HepG2 (cell line): ENCODE measurements at regions of chr13 and their contacts with region 1.

Region 1: DNA sequence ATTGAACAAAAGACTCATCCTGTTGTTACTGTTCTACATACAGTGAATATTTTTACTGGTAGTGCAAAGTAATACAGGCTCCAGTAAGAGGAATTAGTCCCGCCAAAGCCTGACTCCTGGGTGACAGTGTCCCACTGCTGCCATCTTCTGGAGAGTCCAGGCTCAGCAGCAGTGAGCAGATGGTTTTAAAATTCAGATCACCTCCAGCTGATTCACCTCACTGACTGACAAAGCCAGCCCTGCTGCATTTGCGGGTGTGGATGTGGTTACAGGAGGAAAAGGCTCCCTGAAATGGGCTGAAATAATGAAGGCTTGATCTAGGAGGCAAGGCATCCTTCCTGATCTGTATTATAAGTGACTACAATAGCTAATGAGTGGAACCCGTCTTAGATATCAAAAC is 18.3 kb downstream of the PABPC3 start:
- DNase-seq: peak; percentile 62
- ATAC-seq: peak; percentile 97
- H3K4me3 ChIP-seq: no peak overlapping the region
- H3K27ac ChIP-seq: no peak overlapping the region
- H3K4me1 ChIP-seq: no peaks in the 10 kb centered on the region
- H3K27me3 ChIP-seq: peaks cover 0 to 12% of the 10 kb centered on the region in 2 experiments; a peak in 2 of 5 replicates
- CTCF ChIP-seq: peak; percentile 75
- EP300 ChIP-seq: no peak
- POLR2A ChIP-seq: no peak
- RAD21 ChIP-seq: 0 out of 2 replicates have a peak, but pooled peaks have one; percentile 22

Region 2: GRCh38 chr13:25001476-25002206 is 112.6 kb before region 1 on chr13:
- CTCF ChIA-PET with region 1: interaction called, 3 read pairs
- POLR2A ChIA-PET with region 1: no interaction called
- in situ Hi-C with region 1: no loop called
- intact Hi-C with region 1: loop called (anchors 1 kb)
- DNase-seq: no peak
- ATAC-seq: peak; percentile 42; the same call in 2 of the 3 replicates
- H3K4me3 ChIP-seq: no peak overlapping the region
- H3K27ac ChIP-seq: no peak overlapping the region
- H3K4me1 ChIP-seq: peaks cover 27% of the 10 kb centered on the region
- H3K27me3 ChIP-seq: peaks cover 0 to 4% of the 10 kb centered on the region in 2 experiments; a peak in 1 of 5 replicates
- CTCF ChIP-seq: no peak
- EP300 ChIP-seq: no peak
- POLR2A ChIP-seq: no peak
- RAD21 ChIP-seq: no peak

Region 3: GRCh38 chr13:25085125-25085742 is 29.0 kb before region 1 on chr13:
- CTCF ChIA-PET with region 1: interaction called, 7 read pairs
- POLR2A ChIA-PET with region 1: no interaction called
- in situ Hi-C with region 1: no loop called
- intact Hi-C with region 1: loop called (anchors 1 kb)
- DNase-seq: peak; percentile 23
- ATAC-seq: peak; percentile 74
- H3K4me3 ChIP-seq: no peak overlapping the region
- H3K27ac ChIP-seq: no peak overlapping the region
- H3K4me1 ChIP-seq: no peaks in the 10 kb centered on the region
- H3K27me3 ChIP-seq: no peaks in the 10 kb centered on the region; a peak in 1 of 5 replicates
- CTCF ChIP-seq: peak; percentile 44
- EP300 ChIP-seq: no peak
- POLR2A ChIP-seq: no peak
- RAD21 ChIP-seq: no peak

Region 4: DNA sequence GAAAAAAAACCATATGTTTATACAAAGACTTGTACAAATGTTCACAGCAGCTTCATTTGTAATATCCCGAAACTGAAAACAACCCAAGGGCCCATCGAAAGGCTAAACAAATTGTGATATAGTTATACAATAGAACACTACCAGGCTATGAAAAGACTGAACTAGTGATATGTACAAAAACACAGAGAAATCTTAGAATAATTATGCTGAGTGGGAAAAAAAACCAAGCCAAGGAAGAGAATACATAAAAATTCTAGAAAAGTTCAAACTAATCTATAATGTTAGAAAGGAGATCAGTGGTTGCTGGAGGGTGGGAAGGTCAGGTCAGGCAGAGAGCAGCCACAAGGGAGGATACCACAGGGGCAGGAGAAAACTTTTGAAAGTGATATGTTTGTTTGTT is 10.5 kb before region 1 on chr13:
- CTCF ChIA-PET with region 1: no interaction called
- POLR2A ChIA-PET with region 1: no interaction called
- in situ Hi-C with region 1: no loop called
- intact Hi-C with region 1: no loop called
- DNase-seq: no peak
- ATAC-seq: no peak
- H3K4me3 ChIP-seq: no peak overlapping the region
- H3K27ac ChIP-seq: no peak overlapping the region
- H3K4me1 ChIP-seq: no peaks in the 10 kb centered on the region
- H3K27me3 ChIP-seq: peaks cover 0 to 5% of the 10 kb centered on the region in 2 experiments; a peak in 2 of 5 replicates
- CTCF ChIP-seq: no peak
- EP300 ChIP-seq: no peak
- POLR2A ChIP-seq: no peak
- RAD21 ChIP-seq: no peak